ENCODE measurements at regions of chr6 and their contacts with region 1.

Region 1: GRCh38 chr6:131615275-131615674 is 12.8 kb downstream of the MED23 start:
- DNase-seq: no peak
- ATAC-seq: no peak
- H3K4me3 ChIP-seq: no peak overlapping the region
- H3K4me3 Mint-ChIP-seq: no peak overlapping the region
- H3K27ac ChIP-seq: no peak overlapping the region
- H3K27ac Mint-ChIP-seq: peak overlapping the region; percentile 73
- H3K4me1 ChIP-seq: no peaks in the 10 kb centered on the region
- H3K4me1 Mint-ChIP-seq: peaks cover 7% of the 10 kb centered on the region
- H3K27me3 ChIP-seq: no peaks in the 10 kb centered on the region
- H3K27me3 Mint-ChIP-seq: no peaks in the 10 kb centered on the region
- CTCF ChIP-seq: no peak

Region 2: GRCh38 chr6:131581523-131581922 is 33.8 kb before region 1 on chr6:
- CTCF ChIA-PET with region 1: interaction called, 3 read pairs
- POLR2A ChIA-PET with region 1: no interaction called
- intact Hi-C with region 1: loop called (anchors 2 to 5 kb)
- DNase-seq: no peak
- ATAC-seq: no peak
- H3K4me3 ChIP-seq: no peak overlapping the region
- H3K4me3 Mint-ChIP-seq: no peak overlapping the region
- H3K27ac ChIP-seq: no peak overlapping the region
- H3K27ac Mint-ChIP-seq: no peak overlapping the region
- H3K4me1 ChIP-seq: no peaks in the 10 kb centered on the region
- H3K4me1 Mint-ChIP-seq: no peaks in the 10 kb centered on the region
- H3K27me3 ChIP-seq: no peaks in the 10 kb centered on the region
- H3K27me3 Mint-ChIP-seq: no peaks in the 10 kb centered on the region
- CTCF ChIP-seq: no peak

Region 3: GRCh38 chr6:131586543-131586942 is 28.7 kb before region 1 on chr6:
- CTCF ChIA-PET with region 1: no interaction called
- POLR2A ChIA-PET with region 1: no interaction called
- intact Hi-C with region 1: loop called (anchors 2 to 5 kb)
- DNase-seq: no peak
- ATAC-seq: no peak
- H3K4me3 ChIP-seq: no peak overlapping the region
- H3K4me3 Mint-ChIP-seq: no peak overlapping the region
- H3K27ac ChIP-seq: no peak overlapping the region
- H3K27ac Mint-ChIP-seq: no peak overlapping the region
- H3K4me1 ChIP-seq: no peaks in the 10 kb centered on the region
- H3K4me1 Mint-ChIP-seq: no peaks in the 10 kb centered on the region
- H3K27me3 ChIP-seq: no peaks in the 10 kb centered on the region
- H3K27me3 Mint-ChIP-seq: no peaks in the 10 kb centered on the region
- CTCF ChIP-seq: no peak

Region 4: DNA sequence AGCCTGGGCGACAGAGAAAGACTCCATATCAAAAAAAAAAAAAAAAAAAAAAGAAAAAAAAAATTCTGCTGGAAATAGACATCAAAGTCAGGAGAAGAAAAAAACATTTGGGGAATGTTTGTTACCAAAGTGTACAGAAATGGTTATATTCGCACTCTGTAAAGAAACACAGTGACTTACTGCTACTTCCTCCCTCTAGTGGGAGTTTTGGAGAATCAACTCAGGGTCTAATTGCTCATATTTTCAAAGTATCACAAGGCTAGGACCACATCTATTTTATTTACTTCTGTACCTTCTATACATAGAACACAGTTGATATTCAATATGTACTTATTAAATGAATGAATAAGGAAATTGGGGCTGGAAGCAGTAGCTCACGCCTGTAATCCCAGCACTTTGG is 17.8 kb before region 1 on chr6:
- CTCF ChIA-PET with region 1: interaction called, 3 read pairs
- POLR2A ChIA-PET with region 1: no interaction called
- intact Hi-C with region 1: loop called in 1 of 2 experiments (anchors 2 kb)
- DNase-seq: peak in 2 of 9 experiments; percentile 20 to 33
- ATAC-seq: peak; percentile 59
- H3K4me3 ChIP-seq: no peak overlapping the region
- H3K4me3 Mint-ChIP-seq: no peak overlapping the region
- H3K27ac ChIP-seq: no peak overlapping the region
- H3K27ac Mint-ChIP-seq: peak overlapping the region; percentile 27
- H3K4me1 ChIP-seq: no peaks in the 10 kb centered on the region
- H3K4me1 Mint-ChIP-seq: peaks cover 4% of the 10 kb centered on the region
- H3K27me3 ChIP-seq: no peaks in the 10 kb centered on the region
- H3K27me3 Mint-ChIP-seq: no peaks in the 10 kb centered on the region
- CTCF ChIP-seq: peak; percentile 43

Measured in CD8-positive, alpha-beta T cell (primary cell).